H1 (cell line): ENCODE measurements at regions of chr2 and their contacts with region 1.

Region 1: DNA sequence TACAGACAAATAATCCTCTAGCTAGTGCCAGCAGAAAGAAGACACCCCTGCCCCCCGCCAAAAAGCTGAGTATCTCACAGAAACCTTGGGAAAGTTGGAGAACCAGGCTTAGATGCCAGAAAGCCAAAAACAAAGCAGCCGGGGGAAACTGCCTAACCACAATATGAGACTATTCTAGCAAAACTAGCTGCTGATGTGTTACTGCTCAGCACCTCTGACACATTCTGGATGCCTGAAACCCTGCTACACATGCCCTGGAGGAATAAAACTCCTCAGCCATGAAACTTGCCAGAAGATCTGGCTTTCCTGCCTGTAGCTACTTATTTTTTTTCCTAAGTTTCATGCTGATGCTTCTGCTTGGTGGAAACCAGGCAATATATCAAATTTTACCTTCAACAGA is 122.7 kb upstream of the GCFC2 start:
- DNase-seq: no peak
- H3K4me3 ChIP-seq: no peak overlapping the region
- H3K27ac ChIP-seq: no peak overlapping the region
- H3K4me1 ChIP-seq: no peaks in the 10 kb centered on the region
- H3K27me3 ChIP-seq: no peaks in the 10 kb centered on the region
- CTCF ChIP-seq: no peak
- EP300 ChIP-seq: no peak
- POLR2A ChIP-seq: no peak
- RAD21 ChIP-seq: no peak

Region 2: GRCh38 chr2:75729861-75730260 is 103.5 kb before region 1 on chr2:
- CTCF ChIA-PET with region 1: interaction called, 19 read pairs
- POLR2A ChIA-PET with region 1: no interaction called
- DNase-seq: no peak
- H3K4me3 ChIP-seq: no peak overlapping the region
- H3K27ac ChIP-seq: no peak overlapping the region
- H3K4me1 ChIP-seq: no peaks in the 10 kb centered on the region
- H3K27me3 ChIP-seq: no peaks in the 10 kb centered on the region
- CTCF ChIP-seq: peak in 2 of 3 experiments; percentile 22 to 25; a peak in 2 of 4 replicates
- EP300 ChIP-seq: no peak
- POLR2A ChIP-seq: no peak
- RAD21 ChIP-seq: peak; percentile 71 to 75